Right ventricle myocardium inferior (tissue), 1 donor: ENCODE measurements at regions of chr10 and their contacts with region 1.

Region 1: GRCh38 chr10:25875556-25876165 is 58.4 kb upstream of the MYO3A start:
- DNase-seq: peak; percentile 69
- ATAC-seq: no peak

Region 2: DNA sequence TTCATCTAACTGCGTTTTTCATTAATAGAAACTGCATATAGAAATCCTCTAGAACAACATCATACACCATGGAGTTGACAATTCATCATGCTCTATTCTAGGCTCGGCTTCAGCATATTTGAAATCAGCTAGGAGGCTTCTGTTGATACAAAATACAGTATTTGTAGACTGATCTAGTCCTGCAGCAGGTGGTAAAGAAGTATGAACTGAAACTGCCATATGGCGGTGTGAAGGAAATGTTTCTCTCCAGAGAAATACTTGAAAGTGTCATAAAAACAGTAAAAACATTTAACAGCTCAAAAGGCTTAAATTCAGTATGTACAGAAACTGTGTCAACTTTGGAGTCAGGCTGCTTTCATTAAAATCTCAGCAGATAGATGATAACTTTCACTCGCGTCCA is 26.3 kb after region 1 on chr10:
- intact Hi-C with region 1: no loop called
- DNase-seq: no peak
- ATAC-seq: no peak

Region 3: DNA sequence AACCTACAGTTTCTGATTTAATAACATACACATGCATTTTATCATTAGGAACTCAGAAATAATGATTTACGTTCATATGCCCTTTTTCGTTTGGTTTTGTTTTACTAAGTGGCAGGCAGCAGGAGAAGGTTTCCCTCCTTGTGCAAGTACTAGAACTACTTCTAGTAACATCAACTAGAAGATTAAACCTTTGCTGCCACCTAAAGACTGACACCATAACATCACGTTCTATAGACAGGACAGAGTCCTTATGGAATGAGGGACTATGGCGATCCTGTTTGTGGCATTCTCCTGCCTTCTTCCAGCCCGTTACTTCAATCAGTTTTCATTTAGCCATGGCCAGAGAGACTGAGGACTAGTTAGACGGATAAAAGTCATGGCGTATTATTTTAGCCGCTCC is 394.1 kb after region 1 on chr10:
- intact Hi-C with region 1: loop called (anchors 10 kb)
- DNase-seq: no peak
- ATAC-seq: no peak